Right ventricle myocardium superior (tissue), 1 donor: ENCODE measurements at regions of chr10 and their contacts with region 1.

Region 1: GRCh38 chr10:114043532-114044246 is at the start of gene ADRB1:
- DNase-seq: peak; percentile 95
- ATAC-seq: peak; percentile 86
- total RNA-seq, gene ADRB1: 63.0 TPM

Region 2: GRCh38 chr10:113854011-113854760 is 189.5 kb before region 1 on chr10 and contains the starts of genes DCLRE1A and NHLRC2:
- intact Hi-C with region 1: loop called (anchors 10 kb)
- DNase-seq: peak; percentile 90
- ATAC-seq: peak; percentile 86
- total RNA-seq, gene DCLRE1A: 4.9 TPM
- total RNA-seq, gene NHLRC2: 57.5 TPM

Region 3: DNA sequence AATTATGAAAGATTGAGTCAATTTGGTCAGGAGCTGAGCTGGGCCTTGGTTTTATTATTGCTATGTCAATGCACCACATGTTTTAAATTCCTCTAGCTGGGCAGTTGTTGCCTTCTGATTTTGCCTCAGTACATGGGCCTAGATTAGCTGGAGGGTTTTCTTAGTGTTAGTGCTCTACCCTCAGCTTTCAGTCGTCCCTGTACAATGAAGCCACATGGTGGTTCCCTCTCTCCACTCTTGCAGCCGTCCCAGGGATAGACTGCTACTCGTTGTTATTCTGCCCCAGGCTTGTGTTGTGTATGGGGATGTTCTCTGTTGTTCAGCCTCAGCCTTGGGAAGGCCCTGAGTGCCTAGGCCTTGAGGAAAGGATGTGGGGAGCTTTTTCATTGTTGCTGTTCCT is 152.2 kb before region 1 on chr10:
- intact Hi-C with region 1: loop called (anchors 5 kb)
- DNase-seq: no peak
- ATAC-seq: peak; percentile 88